GM12878 (cell line): ENCODE measurements at regions of chr17 and their contacts with region 1.

Region 1: GRCh38 chr17:60305141-60305540 is 86.8 kb downstream of the USP32 start:
- DNase-seq: peak; percentile 59
- ATAC-seq: peak; percentile 99
- H3K4me3 ChIP-seq: no peak overlapping the region
- H3K27ac ChIP-seq: peak overlapping the region; percentile 3
- H3K4me1 ChIP-seq: peaks cover 6% of the 10 kb centered on the region; the same call in 1 of the 2 replicates
- H3K27me3 ChIP-seq: no peaks in the 10 kb centered on the region
- CTCF ChIP-seq: no peak
- EP300 ChIP-seq: no peak
- POLR2A ChIP-seq: no peak
- RAD21 ChIP-seq: no peak

Region 2: GRCh38 chr17:60392042-60392844 is 87.1 kb after region 1 on chr17 and contains the start of gene USP32:
- CTCF ChIA-PET with region 1: interaction called, 3 read pairs
- POLR2A ChIA-PET with region 1: no interaction called
- RAD21 ChIA-PET with region 1: interaction called, 4 read pairs
- SMC1A ChIA-PET with region 1: interaction called, 5 read pairs
- in situ Hi-C with region 1: no loop called
- intact Hi-C with region 1: loop called (anchors 5 kb)
- DNase-seq: peak; percentile 96
- ATAC-seq: peak; percentile 88
- H3K4me3 ChIP-seq: peak within 1 kb of the TSS; percentile 97
- H3K27ac ChIP-seq: peak within 1 kb of the TSS; percentile 89
- H3K4me1 ChIP-seq: no peaks in the 10 kb centered on the region
- H3K27me3 ChIP-seq: no peaks in the 10 kb centered on the region
- CTCF ChIP-seq: peak in 2 of 3 experiments; percentile 15 to 16; a peak in 1 of 6 replicates
- EP300 ChIP-seq: peak in 1 of 2 experiments; percentile 36; a peak in 1 of 4 replicates
- POLR2A ChIP-seq: peak; percentile 87
- RAD21 ChIP-seq: no peak
- polyA plus RNA-seq, gene USP32: 7.8 to 9.8 TPM